ENCODE measurements at regions of chr6 and their contacts with region 1.

Region 1: GRCh38 chr6:136226027-136226673 is 24.0 kb downstream of the MTFR2 start:
- DNase-seq: no peak
- ATAC-seq: peak; percentile 93
- H3K4me3 Mint-ChIP-seq: peak overlapping the region; percentile 53
- H3K27ac Mint-ChIP-seq: no peak overlapping the region
- H3K4me1 Mint-ChIP-seq: peaks cover 16% of the 10 kb centered on the region
- H3K27me3 Mint-ChIP-seq: no peaks in the 10 kb centered on the region
- CTCF ChIP-seq: peak; percentile 99

Region 2: GRCh38 chr6:135451693-135452092 is 774.5 kb before region 1 on chr6:
- CTCF ChIA-PET with region 1: interaction called, 24 read pairs
- POLR2A ChIA-PET with region 1: no interaction called
- intact Hi-C with region 1: loop called (anchors 1 kb)
- DNase-seq: no peak
- ATAC-seq: peak; percentile 45
- H3K4me3 Mint-ChIP-seq: no peak overlapping the region
- H3K27ac Mint-ChIP-seq: no peak overlapping the region
- H3K4me1 Mint-ChIP-seq: peaks cover 8% of the 10 kb centered on the region
- H3K27me3 Mint-ChIP-seq: no peaks in the 10 kb centered on the region
- CTCF ChIP-seq: peak; percentile 54

Region 3: DNA sequence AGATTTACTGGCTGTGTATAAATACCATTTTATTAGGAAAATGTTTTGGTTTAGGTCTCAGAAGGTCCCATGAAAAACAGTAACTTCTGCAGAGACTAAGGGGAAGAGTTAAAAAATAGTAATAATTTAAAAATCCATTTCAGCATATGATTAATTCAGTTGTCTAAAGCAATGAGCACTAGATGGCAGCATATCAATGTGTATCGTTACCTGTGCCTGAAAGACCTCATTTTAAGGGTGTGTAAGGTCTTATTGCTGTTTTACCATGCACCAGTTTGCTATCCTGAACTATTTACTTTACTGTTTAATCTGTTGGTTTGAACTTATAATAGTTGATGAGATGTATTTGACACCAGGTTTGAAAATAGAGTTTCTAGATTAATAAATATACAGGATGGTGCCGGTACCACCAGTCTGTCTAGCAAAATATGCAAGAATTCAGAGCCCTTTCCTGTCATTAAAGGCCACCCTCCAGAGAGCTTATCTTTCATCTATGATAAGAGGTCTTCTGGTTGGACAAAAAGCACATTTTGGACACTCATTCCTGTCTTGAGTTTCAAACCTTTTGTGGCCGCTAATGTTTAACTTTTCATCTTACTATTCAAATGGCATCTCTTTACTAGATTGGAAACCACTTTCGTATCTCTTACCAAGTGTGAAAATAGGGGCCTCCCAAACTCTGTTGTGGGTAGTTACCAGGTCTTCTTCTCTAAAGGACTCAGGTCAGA is 719.7 kb before region 1 on chr6:
- CTCF ChIA-PET with region 1: interaction called, 9 read pairs
- POLR2A ChIA-PET with region 1: no interaction called
- intact Hi-C with region 1: loop called (anchors 1 kb)
- DNase-seq: no peak
- ATAC-seq: peak; percentile 62
- H3K4me3 Mint-ChIP-seq: no peak overlapping the region
- H3K27ac Mint-ChIP-seq: no peak overlapping the region
- H3K4me1 Mint-ChIP-seq: peaks cover 2% of the 10 kb centered on the region
- H3K27me3 Mint-ChIP-seq: no peaks in the 10 kb centered on the region
- CTCF ChIP-seq: peak; percentile 35

Region 4: GRCh38 chr6:135535989-135536414 is 690.1 kb before region 1 on chr6:
- CTCF ChIA-PET with region 1: interaction called, 51 read pairs
- POLR2A ChIA-PET with region 1: no interaction called
- intact Hi-C with region 1: loop called (anchors 1 kb)
- DNase-seq: no peak
- ATAC-seq: no peak
- H3K4me3 Mint-ChIP-seq: no peak overlapping the region
- H3K27ac Mint-ChIP-seq: no peak overlapping the region
- H3K4me1 Mint-ChIP-seq: peaks cover 2% of the 10 kb centered on the region
- H3K27me3 Mint-ChIP-seq: peaks cover 13% of the 10 kb centered on the region
- CTCF ChIP-seq: no peak

Region 5: DNA sequence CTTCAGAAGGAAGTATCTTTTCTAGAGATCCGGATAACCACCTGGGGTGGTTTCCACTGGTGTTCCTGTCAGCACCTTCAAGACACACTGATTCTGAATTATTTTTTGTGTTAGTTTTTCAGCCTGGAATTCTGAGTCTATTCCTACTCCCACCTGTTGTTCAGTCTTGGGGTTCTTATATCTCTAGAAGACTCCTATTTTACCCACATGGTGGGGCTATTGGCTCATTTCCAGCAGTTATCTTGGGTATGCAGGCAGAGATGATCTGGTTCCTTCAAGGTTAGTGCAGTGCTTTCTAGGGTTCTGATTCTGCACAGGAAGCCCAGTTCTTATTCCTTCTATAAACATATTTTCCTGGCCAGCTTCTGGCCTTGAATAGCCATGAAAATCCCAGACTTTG is 550.3 kb before region 1 on chr6:
- CTCF ChIA-PET with region 1: interaction called, 29 read pairs
- POLR2A ChIA-PET with region 1: no interaction called
- intact Hi-C with region 1: loop called (anchors 1 kb)
- DNase-seq: no peak
- ATAC-seq: peak; percentile 70
- H3K4me3 Mint-ChIP-seq: no peak overlapping the region
- H3K27ac Mint-ChIP-seq: no peak overlapping the region
- H3K4me1 Mint-ChIP-seq: no peaks in the 10 kb centered on the region
- H3K27me3 Mint-ChIP-seq: no peaks in the 10 kb centered on the region
- CTCF ChIP-seq: peak; percentile 43

Region 6: GRCh38 chr6:136031982-136032381 is 194.2 kb before region 1 on chr6:
- CTCF ChIA-PET with region 1: no interaction called
- POLR2A ChIA-PET with region 1: no interaction called
- intact Hi-C with region 1: loop called (anchors 1 kb)
- DNase-seq: no peak
- ATAC-seq: no peak
- H3K4me3 Mint-ChIP-seq: no peak overlapping the region
- H3K27ac Mint-ChIP-seq: no peak overlapping the region
- H3K4me1 Mint-ChIP-seq: no peaks in the 10 kb centered on the region
- H3K27me3 Mint-ChIP-seq: no peaks in the 10 kb centered on the region
- CTCF ChIP-seq: no peak

Region 7: DNA sequence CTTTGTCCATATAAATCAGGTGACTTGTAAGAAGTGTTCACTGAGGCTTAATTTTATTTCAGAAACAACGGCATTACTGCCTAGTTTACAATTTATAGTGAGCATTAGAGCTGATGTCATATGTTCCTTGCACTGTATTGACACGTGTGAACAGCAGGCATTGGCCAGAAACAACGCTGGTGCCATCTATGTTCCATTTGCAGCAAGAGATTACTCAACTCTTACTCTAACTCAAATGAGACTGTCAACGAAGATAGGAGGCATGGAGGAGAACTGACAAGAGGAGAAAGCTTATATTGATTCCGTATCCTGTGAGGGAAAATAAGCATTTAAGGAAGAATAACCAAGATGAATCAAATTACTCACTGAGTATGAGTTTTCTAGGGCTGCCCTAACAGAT is 24.4 kb before region 1 on chr6:
- CTCF ChIA-PET with region 1: no interaction called
- POLR2A ChIA-PET with region 1: no interaction called
- intact Hi-C with region 1: no loop called
- DNase-seq: no peak
- ATAC-seq: no peak
- H3K4me3 Mint-ChIP-seq: no peak overlapping the region
- H3K27ac Mint-ChIP-seq: no peak overlapping the region
- H3K4me1 Mint-ChIP-seq: no peaks in the 10 kb centered on the region
- H3K27me3 Mint-ChIP-seq: peaks cover 7% of the 10 kb centered on the region
- CTCF ChIP-seq: no peak

Region 8: GRCh38 chr6:136282906-136283305 is 56.8 kb after region 1 on chr6:
- CTCF ChIA-PET with region 1: no interaction called
- POLR2A ChIA-PET with region 1: no interaction called
- intact Hi-C with region 1: no loop called
- DNase-seq: no peak
- ATAC-seq: no peak
- H3K4me3 Mint-ChIP-seq: peak overlapping the region; percentile 56
- H3K27ac Mint-ChIP-seq: peak overlapping the region; percentile 31
- H3K4me1 Mint-ChIP-seq: peaks cover 79% of the 10 kb centered on the region
- H3K27me3 Mint-ChIP-seq: no peaks in the 10 kb centered on the region
- CTCF ChIP-seq: no peak

Region 9: GRCh38 chr6:136317021-136317694 is 91.0 kb after region 1 on chr6:
- CTCF ChIA-PET with region 1: interaction called, 9 read pairs
- POLR2A ChIA-PET with region 1: no interaction called
- intact Hi-C with region 1: loop called (anchors 1 kb)
- DNase-seq: no peak
- ATAC-seq: peak; percentile 71
- H3K4me3 Mint-ChIP-seq: no peak overlapping the region
- H3K27ac Mint-ChIP-seq: no peak overlapping the region
- H3K4me1 Mint-ChIP-seq: no peaks in the 10 kb centered on the region
- H3K27me3 Mint-ChIP-seq: peaks cover 4% of the 10 kb centered on the region
- CTCF ChIP-seq: no peak

Measured in activated B cell treated with CpG ODN at 0.5 μM for 24 hours (primary cell).